Esophagus muscularis mucosa (tissue), 4 donors: ENCODE measurements at regions of chr19 and their contacts with region 1.

Region 1: DNA sequence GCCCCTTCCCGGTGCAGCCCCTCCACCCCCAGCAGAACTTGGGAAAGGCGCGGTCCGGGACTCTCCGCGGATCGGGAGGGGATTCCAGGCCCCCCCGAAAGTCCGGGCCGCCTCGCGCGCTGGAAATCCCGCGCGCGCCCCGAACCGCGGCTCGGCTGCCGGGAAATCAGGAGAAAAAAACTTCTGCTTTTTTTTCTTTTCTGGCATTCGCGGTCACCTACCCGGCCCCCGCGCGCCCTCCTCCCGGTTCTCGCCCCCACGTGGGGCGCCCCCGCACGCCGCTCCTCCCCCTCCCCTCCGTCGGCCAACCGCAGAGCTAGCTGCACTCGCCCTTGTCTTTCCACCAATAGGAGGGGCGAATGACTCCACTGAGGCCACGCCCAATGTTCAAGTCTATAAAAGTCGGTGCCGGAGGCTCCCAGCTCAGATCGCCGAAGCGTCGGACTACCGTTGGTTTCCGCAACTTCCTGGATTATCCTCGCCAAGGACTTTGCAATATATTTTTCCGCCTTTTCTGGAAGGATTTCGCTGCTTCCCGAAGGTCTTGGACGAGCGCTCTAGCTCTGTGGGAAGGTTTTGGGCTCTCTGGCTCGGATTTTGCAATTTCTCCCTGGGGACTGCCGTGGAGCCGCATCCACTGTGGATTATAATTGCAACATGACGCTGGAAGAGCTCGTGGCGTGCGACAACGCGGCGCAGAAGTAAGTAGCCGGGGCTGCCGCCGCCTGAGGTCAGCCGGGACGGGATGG is at the start of gene GADD45B:
- DNase-seq: peak; percentile 100
- H3K4me3 ChIP-seq: peak within 1 kb of the TSS; percentile 63 to 98 (median 91)
- H3K27ac ChIP-seq: peak within 1 kb of the TSS; percentile 90 to 96 (median 93)
- H3K4me1 ChIP-seq: peaks cover 30 to 43% (median 42%) of the 10 kb centered on the region in 4 donors
- H3K27me3 ChIP-seq: no peaks in the 10 kb centered on the region
- CTCF ChIP-seq: no peak
- EP300 ChIP-seq: peak; percentile 89
- POLR2A ChIP-seq: peak; percentile 100
- total RNA-seq, gene GADD45B: 56.5 to 793 (median 90.5) TPM

Region 2: DNA sequence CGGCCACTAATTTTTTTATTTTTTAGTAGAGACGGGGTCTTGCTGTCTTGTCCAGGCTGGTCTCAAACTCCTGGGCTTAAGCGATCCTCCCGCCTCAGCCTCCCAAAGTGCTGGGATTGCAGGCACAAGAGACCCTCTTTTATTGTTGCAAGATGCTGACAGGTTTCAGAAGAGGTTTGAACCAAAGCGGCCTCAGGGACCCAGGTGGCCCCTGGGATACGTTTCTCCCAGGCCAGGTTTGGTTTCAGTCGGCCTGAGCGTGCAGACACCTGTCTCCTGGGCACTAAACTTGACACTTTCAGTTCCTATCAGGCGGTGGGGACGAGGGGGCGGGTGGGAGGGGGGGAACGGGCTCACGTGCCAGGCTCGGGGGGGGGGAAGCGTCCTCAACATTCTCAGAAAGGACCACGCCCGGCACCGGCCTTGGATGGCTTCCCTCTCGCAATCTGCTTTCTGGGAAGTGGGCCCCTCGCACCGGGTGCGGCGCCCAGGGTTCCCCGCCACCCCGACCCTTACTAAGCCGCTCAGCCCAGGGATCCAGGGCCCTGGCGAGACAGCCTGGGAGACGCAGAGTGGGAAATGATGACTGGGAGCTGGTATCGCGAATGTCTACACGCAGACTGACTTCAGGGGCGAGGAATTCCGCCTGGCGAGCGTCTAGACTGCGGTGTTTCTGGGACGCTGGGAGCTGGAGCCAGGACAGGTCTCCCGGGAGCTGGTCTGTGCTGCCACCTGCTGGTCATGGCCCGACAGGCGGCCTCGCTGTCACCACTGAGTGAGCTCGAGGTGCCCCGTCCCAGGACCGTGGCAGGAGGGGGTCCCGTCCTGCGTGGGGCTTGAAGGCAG is 135.0 kb after region 1 on chr19:
- intact Hi-C with region 1: loop called (anchors 1 kb)
- DNase-seq: peak; percentile 98
- H3K4me3 ChIP-seq: peak overlapping the region; percentile 50 to 59 (median 54)
- H3K27ac ChIP-seq: peak overlapping the region; percentile 89 to 92 (median 90)
- H3K4me1 ChIP-seq: peaks cover 17 to 39% (median 30%) of the 10 kb centered on the region in 4 donors
- H3K27me3 ChIP-seq: no peaks in the 10 kb centered on the region
- CTCF ChIP-seq: peak; percentile 98 to 99 (median 99)
- EP300 ChIP-seq: peak; percentile 86
- POLR2A ChIP-seq: no peak